ENCODE measurements at regions of chr12 and their contacts with region 1.

Region 1: GRCh38 chr12:55738123-55739024 is 4.5 kb upstream of the GDF11 start:
- DNase-seq: peak; percentile 83
- CTCF ChIP-seq: peak; percentile 78

Region 2: GRCh38 chr12:55707841-55708694 is 30.3 kb before region 1 on chr12 and contains the start of gene ITGA7:
- CTCF ChIA-PET with region 1: interaction called, 4 read pairs
- POLR2A ChIA-PET with region 1: interaction called, 10 read pairs
- DNase-seq: peak; percentile 81
- CTCF ChIP-seq: no peak

Region 3: DNA sequence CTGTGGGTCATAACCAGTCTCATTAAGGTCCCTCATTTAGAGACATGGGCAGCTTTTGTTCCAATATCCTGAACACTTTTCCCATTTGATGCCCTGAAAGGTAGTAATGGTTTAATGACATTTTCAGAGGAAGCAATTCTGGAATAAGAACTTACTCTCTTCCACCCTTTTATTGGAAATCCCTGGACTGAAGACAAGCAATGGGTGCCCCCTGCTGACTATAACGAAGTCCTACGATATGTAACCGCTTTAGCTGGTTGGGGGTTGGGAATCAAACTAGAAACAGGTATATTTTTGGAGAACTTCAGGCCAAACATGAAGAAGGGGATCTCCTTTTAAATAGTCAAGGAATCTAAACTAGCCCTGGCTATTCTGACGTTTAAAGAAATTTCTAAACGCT is 58.7 kb after region 1 on chr12:
- CTCF ChIA-PET with region 1: interaction called, 11 read pairs
- POLR2A ChIA-PET with region 1: no interaction called
- DNase-seq: no peak
- CTCF ChIP-seq: no peak

Region 4: GRCh38 chr12:55932551-55932910 is 194.2 kb after region 1 on chr12:
- CTCF ChIA-PET with region 1: interaction called, 71 read pairs
- POLR2A ChIA-PET with region 1: no interaction called
- DNase-seq: peak; percentile 35
- CTCF ChIP-seq: no peak

Region 5: DNA sequence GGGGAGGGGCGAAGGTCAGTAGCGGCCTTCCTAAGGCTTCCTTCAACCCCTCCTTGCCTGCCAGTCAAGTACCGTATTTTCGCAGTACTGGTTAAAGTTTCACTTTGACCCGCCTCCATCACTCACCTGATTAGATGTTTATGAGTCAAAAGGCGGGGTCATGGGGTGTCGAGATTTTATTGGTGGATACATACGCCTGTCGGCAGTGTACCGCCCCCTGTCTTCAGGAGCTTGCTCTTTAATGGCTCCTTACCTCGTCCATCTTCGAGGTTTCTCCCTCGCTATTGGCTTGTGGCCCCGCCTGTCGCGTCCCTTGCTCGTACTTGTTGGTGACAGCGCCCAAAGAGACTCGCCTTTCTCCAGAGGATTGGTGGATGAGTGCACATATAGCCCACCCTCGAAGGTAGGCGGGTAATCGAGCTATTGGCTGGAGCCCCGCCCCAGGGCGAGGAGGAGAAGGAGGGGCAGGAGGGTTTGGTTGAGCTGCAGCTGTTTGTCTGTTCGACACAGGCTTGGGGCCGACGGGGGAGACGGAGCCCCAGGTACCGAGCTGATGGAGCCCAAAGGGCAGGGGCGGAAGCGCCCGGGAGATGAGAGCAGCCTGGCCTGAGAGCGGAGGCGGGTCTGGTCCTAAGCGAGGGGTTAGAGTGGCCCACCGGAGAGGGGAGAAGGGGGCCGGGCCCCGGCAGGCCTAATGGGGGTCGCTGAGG is 235.4 kb after region 1 on chr12 and contains the start of gene RAB5B:
- CTCF ChIA-PET with region 1: interaction called, 19 read pairs
- POLR2A ChIA-PET with region 1: interaction called, 8 read pairs
- DNase-seq: peak; percentile 94
- CTCF ChIP-seq: no peak

Region 6: GRCh38 chr12:56104109-56104814 is 365.9 kb after region 1 on chr12 and contains the start of gene PA2G4:
- CTCF ChIA-PET with region 1: interaction called, 11 read pairs
- POLR2A ChIA-PET with region 1: interaction called, 3 read pairs
- DNase-seq: peak; percentile 97
- CTCF ChIP-seq: no peak

Region 7: DNA sequence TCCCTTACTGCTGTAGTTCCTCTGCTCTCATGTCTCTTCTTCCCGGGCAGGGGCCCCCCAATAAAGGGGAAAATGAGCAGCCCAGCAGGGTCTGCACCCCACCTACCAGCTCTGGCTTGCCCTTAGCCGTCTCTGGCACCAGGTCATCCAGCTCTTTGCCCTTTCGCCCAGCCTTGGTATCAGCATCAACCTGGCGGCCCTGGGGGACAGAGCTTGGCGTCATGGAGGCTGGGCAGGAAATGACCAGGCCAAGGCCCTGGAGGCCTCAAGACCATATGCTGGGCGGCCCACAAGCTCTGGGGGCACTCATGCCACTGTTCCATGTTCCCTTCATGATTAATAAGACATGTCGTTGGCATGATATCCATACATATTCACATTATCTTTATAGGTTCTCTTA is 434.5 kb after region 1 on chr12:
- CTCF ChIA-PET with region 1: no interaction called
- POLR2A ChIA-PET with region 1: no interaction called
- DNase-seq: no peak
- CTCF ChIP-seq: no peak

Region 8: DNA sequence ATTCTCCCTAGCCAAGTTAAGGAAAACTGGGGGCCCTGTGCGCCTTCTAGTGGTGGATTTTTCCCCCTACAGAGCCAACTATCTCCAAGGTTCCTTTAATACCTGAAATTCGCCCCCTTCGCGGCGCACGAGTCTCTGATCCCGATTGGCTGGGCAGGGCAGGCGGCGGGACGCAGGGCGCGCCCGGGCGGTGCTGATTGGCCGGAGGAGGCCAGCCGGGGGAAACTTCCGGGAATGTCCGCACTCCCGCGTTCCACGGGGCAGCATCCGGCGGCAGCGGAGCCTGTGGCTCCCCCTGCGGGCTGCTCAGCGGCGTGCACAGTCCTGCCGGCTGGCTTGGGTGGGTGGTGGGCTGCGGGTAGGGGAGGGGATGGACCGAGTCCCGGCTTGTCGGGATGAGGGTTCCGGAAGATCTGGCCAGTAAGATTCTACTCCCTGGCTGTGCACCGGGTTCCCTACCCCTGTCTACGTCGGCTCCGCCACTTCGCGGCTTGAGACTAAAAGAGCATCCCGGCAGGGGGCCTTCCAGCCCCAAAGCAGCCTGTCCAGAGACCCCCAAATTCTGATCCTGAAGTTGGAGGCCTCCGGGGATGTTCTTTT is 485.8 kb after region 1 on chr12 and contains the start of gene NABP2:
- CTCF ChIA-PET with region 1: interaction called, 11 read pairs
- POLR2A ChIA-PET with region 1: interaction called, 3 read pairs
- DNase-seq: peak; percentile 99
- CTCF ChIP-seq: peak; percentile 90

Measured in GM10248 (cell line).